IMR-90 (cell line): ENCODE measurements at regions of chr13 and their contacts with region 1.

Region 1: GRCh38 chr13:19713186-19713965 is 69.4 kb downstream of the PSPC1 start:
- DNase-seq: peak; percentile 85
- ATAC-seq: peak; percentile 82
- H3K4me3 ChIP-seq: no peak overlapping the region
- H3K27ac ChIP-seq: no peak overlapping the region
- H3K4me1 ChIP-seq: peaks cover 2% of the 10 kb centered on the region; the same call in 1 of the 2 replicates
- H3K27me3 ChIP-seq: no peaks in the 10 kb centered on the region
- CTCF ChIP-seq: no peak
- POLR2A ChIP-seq: no peak
- RAD21 ChIP-seq: no peak

Region 2: DNA sequence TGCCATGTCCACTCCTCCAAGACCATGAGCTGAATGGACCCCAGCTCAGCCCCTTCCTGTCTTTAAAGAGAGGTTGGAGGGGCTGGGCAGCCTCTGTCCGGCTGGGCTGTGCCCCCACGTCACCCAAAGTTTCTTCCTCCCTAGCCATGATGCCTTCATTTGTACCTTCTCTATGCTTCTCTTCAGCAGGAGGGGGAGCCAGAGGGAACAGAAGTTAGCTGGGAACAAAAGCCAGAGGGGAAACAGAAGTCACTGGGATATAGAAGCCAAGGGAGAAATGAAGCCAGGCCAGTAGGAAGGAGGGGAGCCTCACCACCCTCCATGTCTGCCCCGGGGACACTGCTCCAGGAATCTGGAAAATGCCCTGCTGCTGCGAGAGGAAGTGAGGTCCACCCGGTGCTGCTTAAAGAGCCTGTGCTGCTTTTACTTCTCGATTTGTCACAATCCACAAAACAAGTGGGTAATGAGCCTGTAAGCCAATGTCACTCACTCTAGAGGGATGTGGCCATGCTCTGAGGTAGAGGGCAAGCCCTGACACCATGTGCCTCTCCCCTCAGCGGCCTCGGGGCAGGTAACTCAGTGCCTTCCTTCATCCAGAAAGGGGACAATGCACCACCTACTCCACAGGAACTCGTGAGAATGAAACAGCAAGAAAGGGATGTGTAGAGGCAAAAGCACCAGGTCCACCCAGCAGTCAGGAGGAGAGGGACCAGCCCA is 638.1 kb before region 1 on chr13:
- CTCF ChIA-PET with region 1: no interaction called
- POLR2A ChIA-PET with region 1: no interaction called
- dilution Hi-C with region 1: no loop called
- in situ Hi-C with region 1: no loop called
- intact Hi-C with region 1: no loop called
- DNase-seq: no peak
- ATAC-seq: no peak
- H3K4me3 ChIP-seq: no peak overlapping the region
- H3K27ac ChIP-seq: no peak overlapping the region
- H3K4me1 ChIP-seq: no peaks in the 10 kb centered on the region
- H3K27me3 ChIP-seq: no peaks in the 10 kb centered on the region
- CTCF ChIP-seq: no peak
- POLR2A ChIP-seq: no peak
- RAD21 ChIP-seq: no peak

Region 3: DNA sequence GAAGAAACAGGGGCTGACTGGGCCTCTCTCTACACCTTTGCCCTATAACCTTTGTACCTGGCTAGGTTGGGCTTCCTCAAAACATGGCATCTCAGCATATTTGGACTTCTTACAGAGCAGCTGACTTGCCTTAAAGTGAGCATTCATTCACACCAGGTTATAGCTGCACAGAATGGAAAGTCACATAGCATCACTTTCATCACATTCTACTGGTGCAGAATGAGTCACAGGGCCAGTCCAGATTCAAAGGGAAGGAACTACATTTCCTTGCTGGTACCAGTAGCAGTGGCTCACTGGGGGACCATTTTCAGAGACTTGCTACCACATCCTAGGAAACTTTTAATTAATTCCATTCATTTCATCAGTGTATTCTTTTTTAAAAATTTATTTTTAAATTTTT is 131.7 kb before region 1 on chr13:
- CTCF ChIA-PET with region 1: no interaction called
- POLR2A ChIA-PET with region 1: no interaction called
- dilution Hi-C with region 1: no loop called
- in situ Hi-C with region 1: no loop called
- intact Hi-C with region 1: no loop called
- DNase-seq: no peak
- ATAC-seq: no peak
- H3K4me3 ChIP-seq: no peak overlapping the region
- H3K27ac ChIP-seq: no peak overlapping the region
- H3K4me1 ChIP-seq: no peaks in the 10 kb centered on the region
- H3K27me3 ChIP-seq: no peaks in the 10 kb centered on the region
- CTCF ChIP-seq: no peak
- POLR2A ChIP-seq: no peak
- RAD21 ChIP-seq: no peak

Region 4: DNA sequence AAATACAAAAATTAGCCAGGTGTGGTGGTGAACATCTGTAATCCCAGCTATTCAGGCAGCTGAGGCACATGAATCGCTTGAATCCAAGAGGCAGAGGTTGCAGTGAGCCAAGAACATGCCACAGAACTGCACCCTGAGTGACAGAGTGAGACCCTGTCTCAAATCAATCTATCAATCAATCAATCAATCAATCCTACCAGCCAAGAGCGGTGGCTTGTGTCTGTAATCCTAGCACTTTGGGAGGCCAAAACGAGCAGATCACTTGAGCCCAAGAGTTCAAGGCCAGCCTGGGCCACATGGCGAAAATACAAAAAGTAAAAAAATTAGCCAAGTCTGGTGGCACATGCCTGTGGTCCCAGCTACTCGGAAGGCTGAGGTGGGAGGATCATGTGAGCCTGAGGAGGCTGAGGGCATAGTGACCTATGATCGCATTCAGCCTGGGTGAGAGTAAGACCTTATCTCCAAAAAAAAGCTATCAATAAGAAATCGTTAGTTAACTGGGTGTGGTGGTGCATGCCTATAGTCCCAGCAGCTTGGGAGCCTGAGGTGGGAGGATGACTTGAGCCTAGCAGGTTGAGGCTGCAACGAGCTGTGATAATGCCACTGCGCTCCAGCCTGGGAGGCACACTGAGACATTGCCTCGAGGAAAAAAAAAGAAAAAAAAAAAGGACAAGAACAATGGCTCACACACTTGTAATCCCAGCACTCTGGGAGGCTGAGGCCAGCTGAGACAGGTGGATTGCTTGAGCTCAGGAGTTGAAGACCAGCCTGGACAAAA is 53.0 kb after region 1 on chr13:
- CTCF ChIA-PET with region 1: no interaction called
- POLR2A ChIA-PET with region 1: no interaction called
- dilution Hi-C with region 1: no loop called
- in situ Hi-C with region 1: no loop called
- intact Hi-C with region 1: loop called (anchors 10 kb)
- DNase-seq: no peak
- ATAC-seq: no peak
- H3K4me3 ChIP-seq: no peak overlapping the region
- H3K27ac ChIP-seq: no peak overlapping the region
- H3K4me1 ChIP-seq: no peaks in the 10 kb centered on the region
- H3K27me3 ChIP-seq: no peaks in the 10 kb centered on the region
- CTCF ChIP-seq: no peak
- POLR2A ChIP-seq: no peak
- RAD21 ChIP-seq: no peak

Region 5: GRCh38 chr13:19940106-19940505 is 226.7 kb after region 1 on chr13:
- CTCF ChIA-PET with region 1: no interaction called
- POLR2A ChIA-PET with region 1: no interaction called
- dilution Hi-C with region 1: no loop called
- in situ Hi-C with region 1: no loop called
- intact Hi-C with region 1: no loop called
- DNase-seq: no peak
- ATAC-seq: no peak
- H3K4me3 ChIP-seq: no peak overlapping the region
- H3K27ac ChIP-seq: no peak overlapping the region
- H3K4me1 ChIP-seq: no peaks in the 10 kb centered on the region
- H3K27me3 ChIP-seq: no peaks in the 10 kb centered on the region
- CTCF ChIP-seq: no peak
- POLR2A ChIP-seq: no peak
- RAD21 ChIP-seq: no peak